Dorsolateral prefrontal cortex (tissue), 120 donors: ENCODE measurements at regions of chr6 and their contacts with region 1.

Region 1: GRCh38 chr6:31971993-31972708 is at the start of gene DXO:
- DNase-seq: peak; percentile 91 to 98 (median 95)
- H3K4me3 ChIP-seq: peak within 1 kb of the TSS; percentile 62 to 100 (median 90)
- H3K27ac ChIP-seq: peak within 1 kb of the TSS; percentile 80 to 100 (median 97)
- H3K27me3 ChIP-seq: no peaks in the 10 kb centered on the region
- CTCF ChIP-seq: peak in 7 of 56 donors; percentile 6 to 26 (median 18)
- total RNA-seq, gene DXO: 15.3 to 38.3 (median 23.5) TPM

Region 2: GRCh38 chr6:31541658-31542521 is 430.3 kb before region 1 on chr6 and contains the start of gene DDX39B:
- intact Hi-C with region 1: loop called in 1 of 2 experiments (anchors 10 kb)
- DNase-seq: peak; percentile 93 to 97 (median 95)
- H3K4me3 ChIP-seq: peak within 1 kb of the TSS; percentile 58 to 97 (median 80)
- H3K27ac ChIP-seq: peak within 1 kb of the TSS; percentile 77 to 99 (median 97)
- H3K27me3 ChIP-seq: no peaks in the 10 kb centered on the region
- CTCF ChIP-seq: peak in 25 of 56 donors; percentile 10 to 57 (median 24)
- total RNA-seq, gene DDX39B: 154 to 265 (median 191) TPM

Region 3: GRCh38 chr6:31958741-31959739 is 13.1 kb before region 1 on chr6 and contains the starts of genes NELFE and SKIC2:
- intact Hi-C with region 1: loop called (anchors 1 kb)
- DNase-seq: peak; percentile 98 to 100 (median 99)
- H3K4me3 ChIP-seq: peak within 1 kb of the TSS; percentile 61 to 100 (median 94)
- H3K27ac ChIP-seq: peak within 1 kb of the TSS in 58 of 59 donors; percentile 10 to 93 (median 81)
- H3K27me3 ChIP-seq: no peaks in the 10 kb centered on the region
- CTCF ChIP-seq: peak in 26 of 56 donors; percentile 4 to 53 (median 26)
- total RNA-seq, gene NELFE: 28.5 to 67.8 (median 43.3) TPM
- total RNA-seq, gene SKIC2: 48.6 to 115 (median 68.4) TPM

Region 4: DNA sequence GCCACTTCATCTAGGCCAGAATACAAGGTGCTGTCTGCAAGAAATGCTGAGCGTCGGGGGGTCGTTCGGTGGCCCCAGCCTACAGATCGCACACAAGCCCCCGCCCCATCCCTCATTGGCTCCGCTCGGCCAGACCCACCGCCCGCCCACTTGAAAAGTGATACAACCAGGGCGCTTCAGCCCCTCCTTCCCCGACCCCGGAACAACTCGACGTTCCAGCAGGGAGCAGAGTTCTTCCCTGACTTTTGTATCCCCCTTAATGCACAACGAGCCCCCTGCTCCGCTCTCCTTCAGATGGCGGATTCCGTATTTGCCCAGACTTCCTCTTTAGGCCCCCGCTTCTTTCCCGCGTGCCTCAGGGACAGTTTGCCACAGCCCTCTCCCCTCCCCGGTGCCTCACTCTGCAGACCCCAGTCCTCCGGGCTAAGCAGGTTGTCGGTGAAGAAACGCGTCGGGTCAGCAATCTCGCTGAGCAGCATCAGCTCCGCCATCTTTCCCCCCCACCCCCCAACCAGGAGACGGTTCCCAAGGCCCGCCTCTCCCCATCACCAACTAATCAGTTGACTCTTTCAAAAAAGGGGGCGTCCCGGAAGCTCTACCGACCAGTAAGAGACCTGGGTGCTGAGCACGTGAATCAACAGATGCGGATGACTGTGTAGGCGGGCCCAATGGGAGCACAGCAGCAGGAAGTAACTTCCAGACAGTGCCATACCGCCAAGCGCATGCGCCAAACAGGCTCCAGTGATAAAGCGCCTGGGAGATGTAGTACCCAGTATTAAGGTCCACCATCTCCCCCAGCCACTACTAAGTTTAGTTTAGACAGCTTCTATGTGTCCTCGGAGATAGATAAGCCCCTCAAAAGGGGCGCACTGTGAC is 155.8 kb after region 1 on chr6 and contains the start of gene ATF6B:
- intact Hi-C with region 1: loop called in 1 of 2 experiments (anchors 10 kb)
- DNase-seq: peak; percentile 98 to 100 (median 99)
- H3K4me3 ChIP-seq: peak within 1 kb of the TSS; percentile 60 to 100 (median 93)
- H3K27ac ChIP-seq: peak within 1 kb of the TSS in 57 of 59 donors; percentile 13 to 97 (median 91)
- H3K27me3 ChIP-seq: no peaks in the 10 kb centered on the region
- CTCF ChIP-seq: peak in 16 of 56 donors; percentile 3 to 58 (median 20)
- total RNA-seq, gene ATF6B: 61.3 to 117 (median 80.7) TPM

Region 5: DNA sequence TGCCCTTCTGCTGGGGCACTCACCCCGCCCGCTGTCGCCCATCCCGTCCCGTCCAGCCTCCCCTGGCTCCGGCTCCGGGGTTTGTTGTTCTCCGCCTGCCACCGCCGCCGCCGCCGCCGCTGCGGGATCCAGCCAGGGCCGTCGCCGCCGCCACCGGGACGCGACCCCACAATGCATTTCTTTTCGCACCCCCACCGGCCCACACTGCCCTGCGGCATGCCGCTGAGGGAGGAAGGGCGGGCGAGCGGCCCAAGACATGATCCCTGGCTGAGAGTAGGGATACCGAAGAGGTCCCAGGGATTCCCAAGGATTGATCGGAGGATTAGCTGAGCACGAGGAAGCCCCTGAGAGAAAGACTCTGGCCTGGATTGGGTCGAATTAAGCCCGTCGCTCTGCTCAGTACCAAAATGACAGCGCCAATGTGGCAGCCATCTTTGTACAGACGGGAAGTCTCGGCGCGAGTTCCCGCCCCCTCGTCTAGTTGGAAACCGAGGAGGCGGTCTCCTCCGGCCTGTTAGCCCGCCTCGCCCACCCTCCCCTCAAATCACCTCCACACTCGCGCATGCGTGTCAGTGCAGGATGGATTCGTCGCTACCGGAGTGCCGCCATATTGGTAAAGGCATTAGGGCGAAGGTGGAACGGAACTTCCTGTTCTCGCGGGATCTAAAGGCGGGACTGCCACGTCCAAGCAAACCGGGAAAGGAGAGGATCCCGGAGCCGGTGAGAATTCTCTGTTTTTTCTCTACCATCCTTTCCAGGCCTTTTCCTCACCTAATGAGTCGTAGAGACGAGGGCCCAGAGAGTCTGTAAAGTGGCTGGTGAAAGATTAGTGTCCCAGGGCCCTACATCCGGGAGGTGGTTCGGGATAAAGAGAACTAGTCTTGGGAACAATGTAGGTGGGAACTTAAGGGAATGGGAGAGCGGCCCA is 1228.3 kb after region 1 on chr6 and contains the starts of genes RXRB and SLC39A7:
- intact Hi-C with region 1: loop called in 1 of 2 experiments (anchors 10 kb)
- DNase-seq: peak; percentile 95 to 99 (median 98)
- H3K4me3 ChIP-seq: peak within 1 kb of the TSS; percentile 66 to 99 (median 87)
- H3K27ac ChIP-seq: peak within 1 kb of the TSS; percentile 95 to 100 (median 99)
- H3K27me3 ChIP-seq: no peaks in the 10 kb centered on the region
- CTCF ChIP-seq: peak in 28 of 56 donors; percentile 5 to 61 (median 23)
- total RNA-seq, gene RXRB: 47.2 to 81.0 (median 62.9) TPM
- total RNA-seq, gene SLC39A7: 23.7 to 48.3 (median 35.6) TPM

Region 6: GRCh38 chr6:33288921-33289748 is 1317.0 kb after region 1 on chr6 and contains the starts of genes PFDN6 and WDR46:
- intact Hi-C with region 1: loop called in 1 of 2 experiments (anchors 10 kb)
- DNase-seq: peak; percentile 63 to 92 (median 86)
- H3K4me3 ChIP-seq: peak within 1 kb of the TSS; percentile 66 to 99 (median 89)
- H3K27ac ChIP-seq: peak within 1 kb of the TSS; percentile 44 to 96 (median 90)
- H3K27me3 ChIP-seq: no peaks in the 10 kb centered on the region
- CTCF ChIP-seq: peak in 14 of 56 donors; percentile 7 to 53 (median 22)
- total RNA-seq, gene PFDN6: 29.1 to 82.4 (median 59.2) TPM
- total RNA-seq, gene WDR46: 14.7 to 53.7 (median 30.1) TPM